Activated CD4-positive, alpha-beta T cell treated with anti-CD3 and anti-CD28 coated beads for 36 hours (primary cell): ENCODE measurements at regions of chr7 and their contacts with region 1.

Region 1: GRCh38 chr7:139515266-139515665 is 8.2 kb upstream of the CLEC2L start:
- DNase-seq: no peak
- ATAC-seq: no peak
- H3K4me3 Mint-ChIP-seq: no peak overlapping the region
- H3K27ac Mint-ChIP-seq: no peak overlapping the region
- H3K4me1 Mint-ChIP-seq: no peaks in the 10 kb centered on the region
- H3K27me3 Mint-ChIP-seq: no peaks in the 10 kb centered on the region

Region 2: DNA sequence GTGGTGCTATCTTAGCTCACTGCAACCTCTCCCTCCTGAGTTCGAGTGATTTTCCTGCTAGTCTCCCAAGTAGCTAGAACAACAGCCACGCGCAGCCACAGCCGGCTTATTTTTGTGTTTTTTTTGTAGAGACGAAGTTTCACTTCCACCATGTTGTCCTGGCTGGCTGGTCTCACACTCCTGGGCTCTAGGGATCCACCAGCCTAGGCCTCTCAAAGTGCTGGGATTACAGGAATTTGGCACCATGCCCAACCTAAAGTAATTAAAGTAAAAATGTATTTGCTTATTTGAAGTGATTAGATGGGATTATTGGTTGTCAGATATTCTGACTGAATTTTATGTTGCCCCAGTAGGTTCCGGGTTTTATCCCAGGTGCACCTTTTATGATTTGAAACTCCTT is 132.8 kb before region 1 on chr7:
- CTCF ChIA-PET with region 1: no interaction called
- POLR2A ChIA-PET with region 1: no interaction called
- intact Hi-C with region 1: no loop called
- DNase-seq: no peak
- ATAC-seq: no peak
- H3K4me3 Mint-ChIP-seq: no peak overlapping the region
- H3K27ac Mint-ChIP-seq: no peak overlapping the region
- H3K4me1 Mint-ChIP-seq: peaks cover 3% of the 10 kb centered on the region
- H3K27me3 Mint-ChIP-seq: no peaks in the 10 kb centered on the region

Region 3: GRCh38 chr7:139808427-139808826 is 293.2 kb after region 1 on chr7:
- CTCF ChIA-PET with region 1: no interaction called
- POLR2A ChIA-PET with region 1: no interaction called
- intact Hi-C with region 1: loop called in 1 of 2 experiments (anchors 10 kb)
- DNase-seq: no peak
- ATAC-seq: no peak
- H3K4me3 Mint-ChIP-seq: no peak overlapping the region
- H3K27ac Mint-ChIP-seq: no peak overlapping the region
- H3K4me1 Mint-ChIP-seq: peaks cover 4% of the 10 kb centered on the region
- H3K27me3 Mint-ChIP-seq: peaks cover 2% of the 10 kb centered on the region